Breast epithelium (tissue), 4 donors: ENCODE measurements at regions of chr7 and their contacts with region 1.

Region 1: DNA sequence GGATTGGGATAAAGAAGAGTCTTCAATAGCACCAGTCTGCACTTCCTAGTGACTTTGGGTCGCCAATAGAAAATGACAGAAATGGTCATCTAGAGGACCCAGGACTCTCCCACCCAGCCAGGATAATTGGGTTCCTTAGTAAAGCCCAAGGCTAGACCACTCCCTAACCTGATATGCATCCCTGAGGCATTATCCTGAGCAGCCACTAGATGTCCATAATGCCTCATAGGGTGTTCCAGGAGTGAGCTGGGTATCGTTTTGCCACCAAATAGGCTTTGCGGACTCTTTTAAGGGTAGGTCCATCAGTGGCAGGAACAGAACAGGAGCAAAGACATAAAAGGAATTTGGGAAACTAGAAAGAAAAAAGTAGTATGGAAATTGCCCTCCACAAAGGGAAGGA is 4.5 kb upstream of the LRRC4 start:
- DNase-seq: no peak
- H3K4me3 ChIP-seq: no peak overlapping the region
- H3K27ac ChIP-seq: no peak overlapping the region
- H3K4me1 ChIP-seq: no peaks in the 10 kb centered on the region
- H3K27me3 ChIP-seq: no peaks in the 10 kb centered on the region
- CTCF ChIP-seq: no peak
- POLR2A ChIP-seq: no peak

Region 2: DNA sequence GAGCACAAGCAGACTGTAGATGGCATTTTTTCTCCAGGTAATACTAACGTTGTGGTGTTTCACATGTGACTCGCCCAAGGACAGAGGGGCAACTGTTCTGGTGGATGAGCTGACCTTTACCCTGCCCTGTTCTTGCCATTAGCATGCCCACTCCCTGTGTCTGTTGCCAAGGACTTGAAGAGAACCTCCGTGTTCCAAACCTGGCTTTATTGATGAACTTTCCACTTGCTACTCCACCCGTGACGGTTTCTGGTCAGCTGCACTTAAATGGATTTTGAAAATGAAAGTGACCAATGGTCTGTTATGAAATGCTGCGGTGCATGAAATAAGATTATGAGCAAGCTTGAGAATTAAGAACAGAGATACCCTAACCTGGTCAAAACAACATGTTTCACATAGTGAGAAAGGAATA is 34.9 kb before region 1 on chr7:
- intact Hi-C with region 1: loop called (anchors 2 kb)
- DNase-seq: no peak
- H3K4me3 ChIP-seq: peak overlapping the region in 1 of 3 donors; percentile 26
- H3K27ac ChIP-seq: no peak overlapping the region
- H3K4me1 ChIP-seq: no peaks in the 10 kb centered on the region
- H3K27me3 ChIP-seq: no peaks in the 10 kb centered on the region
- CTCF ChIP-seq: no peak
- POLR2A ChIP-seq: no peak

Region 3: GRCh38 chr7:128053023-128053422 is 17.3 kb after region 1 on chr7:
- intact Hi-C with region 1: loop called (anchors 1 kb)
- DNase-seq: no peak
- H3K4me3 ChIP-seq: no peak overlapping the region
- H3K27ac ChIP-seq: no peak overlapping the region
- H3K4me1 ChIP-seq: no peaks in the 10 kb centered on the region
- H3K27me3 ChIP-seq: no peaks in the 10 kb centered on the region
- CTCF ChIP-seq: no peak
- POLR2A ChIP-seq: no peak

Region 4: GRCh38 chr7:128347647-128348097 is 312.0 kb after region 1 on chr7:
- intact Hi-C with region 1: loop called (anchors 5 kb)
- DNase-seq: no peak
- H3K4me3 ChIP-seq: no peak overlapping the region
- H3K27ac ChIP-seq: no peak overlapping the region
- H3K4me1 ChIP-seq: peaks cover 0 to 5% of the 10 kb centered on the region in 2 donors
- H3K27me3 ChIP-seq: peaks cover 0 to 24% of the 10 kb centered on the region in 2 donors
- CTCF ChIP-seq: no peak
- POLR2A ChIP-seq: no peak

Region 5: GRCh38 chr7:129514683-129515082 is 1479.0 kb after region 1 on chr7:
- intact Hi-C with region 1: no loop called
- DNase-seq: no peak
- H3K4me3 ChIP-seq: no peak overlapping the region
- H3K27ac ChIP-seq: no peak overlapping the region
- H3K4me1 ChIP-seq: no peaks in the 10 kb centered on the region
- H3K27me3 ChIP-seq: no peaks in the 10 kb centered on the region
- CTCF ChIP-seq: no peak
- POLR2A ChIP-seq: no peak